Panc1 (cell line): ENCODE measurements at regions of chr5 and their contacts with region 1.

Region 1: DNA sequence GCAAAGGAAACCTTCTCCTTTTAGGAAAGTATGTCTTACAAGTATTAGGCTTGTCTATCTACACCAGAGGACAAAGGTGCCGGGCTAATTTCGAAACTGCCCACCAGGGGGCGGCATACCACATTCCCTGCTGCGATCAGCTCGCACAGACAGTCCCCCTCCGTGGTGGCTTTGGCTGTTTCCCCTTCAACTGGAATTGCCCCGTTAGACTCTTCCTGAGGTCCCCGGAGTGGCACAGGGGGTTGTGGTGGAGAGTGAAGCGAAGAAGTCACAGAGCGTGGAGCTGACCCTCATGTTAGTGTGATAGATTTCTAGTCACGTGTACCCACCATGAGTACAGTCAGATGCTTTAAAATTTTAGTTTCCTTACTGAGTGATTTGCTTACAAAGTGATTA is 17.5 kb downstream of the PTTG1 start:
- DNase-seq: peak; percentile 88
- ATAC-seq: peak; percentile 95
- H3K4me3 ChIP-seq: peak overlapping the region; percentile 39 to 62
- H3K27ac ChIP-seq: peak overlapping the region; percentile 72; the same call in 1 of the 2 replicates
- H3K4me1 ChIP-seq: peaks cover 6% of the 10 kb centered on the region; the same call in 1 of the 2 replicates
- H3K27me3 ChIP-seq: no peaks in the 10 kb centered on the region
- CTCF ChIP-seq: peak; percentile 86

Region 2: DNA sequence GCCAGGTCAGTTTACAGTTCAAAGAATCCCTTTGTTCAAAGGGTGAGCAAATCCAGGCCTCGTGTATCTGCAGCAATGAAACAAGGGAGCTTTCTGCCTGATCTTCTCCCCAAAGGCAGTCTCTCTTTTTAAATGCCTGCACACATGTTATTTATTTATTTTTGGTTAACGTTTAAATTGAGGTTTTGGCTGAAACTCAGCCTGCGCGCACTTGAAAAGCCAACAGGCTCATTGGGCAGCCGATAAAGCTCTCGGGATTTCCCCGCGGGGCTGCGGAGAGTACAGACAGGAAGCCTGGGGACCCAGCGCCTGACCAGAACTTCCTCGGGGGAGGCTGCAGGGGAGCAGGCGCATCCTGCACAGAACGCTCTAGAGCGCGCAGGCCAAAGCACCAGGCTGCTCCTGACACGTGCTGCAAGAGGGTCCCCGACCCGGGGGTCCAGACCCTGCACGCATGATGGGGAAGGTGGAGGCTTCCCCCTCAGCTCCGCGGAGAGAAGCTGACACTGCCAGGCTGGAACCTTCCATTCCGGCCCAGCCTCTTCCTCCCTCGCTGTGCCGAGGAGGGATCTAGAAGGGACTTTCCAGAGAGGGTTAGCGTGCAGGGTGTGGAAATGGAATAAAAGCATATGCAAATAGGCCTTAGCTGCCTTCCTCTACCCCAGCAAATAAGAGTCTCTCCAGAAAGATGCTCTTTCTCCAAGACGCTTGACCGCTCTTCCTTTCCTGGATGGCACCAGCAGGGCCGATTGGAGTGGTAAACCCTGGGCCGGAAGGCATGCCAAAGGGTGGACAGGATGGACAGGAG is 28.6 kb after region 1 on chr5:
- CTCF ChIA-PET with region 1: interaction called, 15 read pairs
- POLR2A ChIA-PET with region 1: no interaction called
- in situ Hi-C with region 1: no loop called
- intact Hi-C with region 1: no loop called
- DNase-seq: peak; percentile 70
- ATAC-seq: peak; percentile 91
- H3K4me3 ChIP-seq: peak overlapping the region; percentile 39 to 58
- H3K27ac ChIP-seq: peak overlapping the region; percentile 94
- H3K4me1 ChIP-seq: peaks cover 54% of the 10 kb centered on the region
- H3K27me3 ChIP-seq: no peaks in the 10 kb centered on the region
- CTCF ChIP-seq: no peak

Region 3: GRCh38 chr5:160508780-160509361 is 69.7 kb after region 1 on chr5:
- CTCF ChIA-PET with region 1: interaction called, 3 read pairs
- POLR2A ChIA-PET with region 1: no interaction called
- in situ Hi-C with region 1: no loop called
- intact Hi-C with region 1: loop called (anchors 5 kb)
- DNase-seq: peak; percentile 84
- ATAC-seq: peak; percentile 90
- H3K4me3 ChIP-seq: no peak overlapping the region
- H3K27ac ChIP-seq: no peak overlapping the region
- H3K4me1 ChIP-seq: peaks cover 5% of the 10 kb centered on the region; the same call in 1 of the 2 replicates
- H3K27me3 ChIP-seq: no peaks in the 10 kb centered on the region
- CTCF ChIP-seq: peak; percentile 87

Region 4: GRCh38 chr5:160787240-160787639 is 348.0 kb after region 1 on chr5:
- CTCF ChIA-PET with region 1: no interaction called
- POLR2A ChIA-PET with region 1: no interaction called
- in situ Hi-C with region 1: no loop called
- intact Hi-C with region 1: loop called (anchors 5 kb)
- DNase-seq: no peak
- ATAC-seq: no peak
- H3K4me3 ChIP-seq: no peak overlapping the region
- H3K27ac ChIP-seq: no peak overlapping the region
- H3K4me1 ChIP-seq: no peaks in the 10 kb centered on the region
- H3K27me3 ChIP-seq: no peaks in the 10 kb centered on the region
- CTCF ChIP-seq: peak; percentile 52